Mammary epithelial cell (primary cell): ENCODE measurements at regions of chr1 and their contacts with region 1.

Region 1: DNA sequence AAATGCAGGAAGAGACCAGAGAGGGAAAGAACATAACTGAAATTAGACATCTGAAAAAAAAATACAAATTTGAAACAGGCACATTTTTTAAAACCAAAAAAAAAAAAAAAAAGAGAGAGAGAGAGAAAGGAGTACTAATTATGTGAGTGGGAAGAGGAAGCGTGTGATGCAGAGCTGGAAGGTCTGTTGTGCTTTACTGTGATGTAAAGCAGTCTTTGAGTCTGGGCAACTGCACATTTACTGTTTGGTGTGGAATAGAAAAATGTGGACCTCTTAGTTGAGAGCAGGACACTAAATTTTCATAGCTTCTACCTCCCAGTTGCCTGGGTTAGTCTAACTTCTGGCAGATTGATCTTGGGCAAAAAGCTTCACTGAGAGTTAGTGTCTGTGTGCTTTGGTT is 16.5 kb downstream of the LHX9 start:
- DNase-seq: no peak
- H3K4me3 ChIP-seq: no peak overlapping the region
- H3K27ac ChIP-seq: no peak overlapping the region
- H3K4me1 ChIP-seq: peaks cover 3% of the 10 kb centered on the region
- H3K27me3 ChIP-seq: peaks cover 32% of the 10 kb centered on the region
- CTCF ChIP-seq: no peak

Region 2: GRCh38 chr1:197825541-197825940 is 108.1 kb before region 1 on chr1:
- CTCF ChIA-PET with region 1: no interaction called
- dilution Hi-C with region 1: no loop called
- in situ Hi-C with region 1: no loop called
- intact Hi-C with region 1: no loop called
- DNase-seq: no peak
- H3K4me3 ChIP-seq: no peak overlapping the region
- H3K27ac ChIP-seq: no peak overlapping the region
- H3K4me1 ChIP-seq: no peaks in the 10 kb centered on the region
- H3K27me3 ChIP-seq: no peaks in the 10 kb centered on the region
- CTCF ChIP-seq: no peak

Region 3: GRCh38 chr1:198499588-198499987 is 565.9 kb after region 1 on chr1:
- CTCF ChIA-PET with region 1: interaction called, 16 read pairs
- dilution Hi-C with region 1: no loop called
- in situ Hi-C with region 1: no loop called
- intact Hi-C with region 1: no loop called
- DNase-seq: no peak
- H3K4me3 ChIP-seq: no peak overlapping the region
- H3K27ac ChIP-seq: no peak overlapping the region
- H3K4me1 ChIP-seq: peaks cover 17% of the 10 kb centered on the region
- H3K27me3 ChIP-seq: no peaks in the 10 kb centered on the region
- CTCF ChIP-seq: no peak